Activated CD4-positive, alpha-beta memory T cell treated with anti-CD3 and anti-CD28 coated beads, Interleukin-2, amount 10 ng/mL, durations not matched to agents 7 days and 5 days (primary cell): ENCODE measurements at regions of chr15 and their contacts with region 1.

Region 1: DNA sequence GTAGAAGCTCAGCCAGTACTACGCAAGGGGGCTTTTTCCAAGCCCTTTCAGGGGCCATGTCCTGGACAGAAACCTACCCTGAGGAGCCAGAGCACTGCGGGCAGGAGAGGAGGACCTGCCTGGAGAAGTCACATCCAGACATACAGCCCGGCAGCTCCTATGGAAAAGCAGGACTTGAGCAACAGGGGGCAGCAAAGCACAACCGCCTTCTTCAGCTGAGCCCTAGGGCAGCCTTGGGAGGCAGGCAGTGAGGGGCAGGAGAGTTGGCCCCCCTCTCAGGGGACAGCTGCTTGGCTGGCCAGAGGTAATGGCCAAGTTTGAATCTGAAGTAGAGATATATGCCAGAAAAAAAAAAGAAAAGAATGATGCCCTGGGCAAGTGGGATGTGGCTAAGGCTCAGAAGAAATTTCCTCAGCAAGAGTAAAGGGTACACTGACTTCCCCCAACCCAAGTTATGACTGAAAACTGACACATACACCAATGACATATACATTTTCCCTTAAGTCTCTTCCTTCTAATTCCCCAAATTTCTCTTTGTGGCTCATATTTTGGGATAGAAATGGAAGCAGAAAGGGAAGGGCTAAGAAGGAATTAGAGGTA is 56.9 kb downstream of the CYP19A1 start:
- DNase-seq: peak; percentile 25
- H3K4me3 Mint-ChIP-seq: no peak overlapping the region
- H3K27ac Mint-ChIP-seq: no peak overlapping the region
- H3K4me1 Mint-ChIP-seq: peaks cover 5% of the 10 kb centered on the region
- H3K27me3 Mint-ChIP-seq: peaks cover 23% of the 10 kb centered on the region

Region 2: DNA sequence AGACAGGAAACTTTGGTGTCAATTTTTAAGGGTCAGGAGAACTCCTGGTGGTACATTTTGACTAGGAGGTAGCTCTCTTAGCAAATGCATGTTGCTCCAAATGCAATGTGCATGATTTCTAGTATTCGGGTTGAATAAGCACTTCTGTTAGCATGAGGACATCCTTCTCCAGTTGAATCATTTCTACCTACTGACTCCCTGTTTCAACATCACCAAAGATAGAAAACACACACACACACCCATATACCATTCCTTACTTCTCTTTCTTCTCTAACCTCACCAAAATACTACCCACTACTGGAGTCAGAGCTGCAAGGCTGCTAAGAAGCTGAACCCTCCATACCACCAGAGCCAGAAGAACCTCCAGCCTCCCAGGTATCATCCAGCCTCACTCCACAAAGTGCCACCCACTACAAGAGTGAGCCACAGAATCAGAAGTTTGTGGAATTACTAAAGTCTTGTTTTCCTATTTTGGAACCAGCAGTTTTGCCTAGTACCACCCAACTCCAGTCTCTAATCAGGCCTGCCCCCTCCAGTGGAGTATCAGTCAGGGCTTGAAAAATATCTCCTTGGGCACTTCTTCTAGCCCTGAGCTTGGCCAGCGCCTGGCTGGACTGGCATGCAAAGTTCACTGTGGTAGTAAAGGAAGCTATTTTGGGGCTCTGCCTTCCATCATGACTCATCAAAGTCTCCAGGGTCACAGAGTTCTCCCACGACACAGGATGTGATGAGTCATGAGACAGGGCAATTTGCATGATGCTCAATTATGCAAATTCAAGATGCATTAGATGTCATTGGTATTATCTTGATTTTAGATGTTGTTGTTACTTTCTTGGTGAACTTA is 53.3 kb before region 1 on chr15:
- CTCF ChIA-PET with region 1: interaction called, 15 read pairs
- POLR2A ChIA-PET with region 1: no interaction called
- DNase-seq: peak; percentile 49
- H3K4me3 Mint-ChIP-seq: no peak overlapping the region
- H3K27ac Mint-ChIP-seq: no peak overlapping the region
- H3K4me1 Mint-ChIP-seq: peaks cover 21% of the 10 kb centered on the region
- H3K27me3 Mint-ChIP-seq: no peaks in the 10 kb centered on the region

Region 3: DNA sequence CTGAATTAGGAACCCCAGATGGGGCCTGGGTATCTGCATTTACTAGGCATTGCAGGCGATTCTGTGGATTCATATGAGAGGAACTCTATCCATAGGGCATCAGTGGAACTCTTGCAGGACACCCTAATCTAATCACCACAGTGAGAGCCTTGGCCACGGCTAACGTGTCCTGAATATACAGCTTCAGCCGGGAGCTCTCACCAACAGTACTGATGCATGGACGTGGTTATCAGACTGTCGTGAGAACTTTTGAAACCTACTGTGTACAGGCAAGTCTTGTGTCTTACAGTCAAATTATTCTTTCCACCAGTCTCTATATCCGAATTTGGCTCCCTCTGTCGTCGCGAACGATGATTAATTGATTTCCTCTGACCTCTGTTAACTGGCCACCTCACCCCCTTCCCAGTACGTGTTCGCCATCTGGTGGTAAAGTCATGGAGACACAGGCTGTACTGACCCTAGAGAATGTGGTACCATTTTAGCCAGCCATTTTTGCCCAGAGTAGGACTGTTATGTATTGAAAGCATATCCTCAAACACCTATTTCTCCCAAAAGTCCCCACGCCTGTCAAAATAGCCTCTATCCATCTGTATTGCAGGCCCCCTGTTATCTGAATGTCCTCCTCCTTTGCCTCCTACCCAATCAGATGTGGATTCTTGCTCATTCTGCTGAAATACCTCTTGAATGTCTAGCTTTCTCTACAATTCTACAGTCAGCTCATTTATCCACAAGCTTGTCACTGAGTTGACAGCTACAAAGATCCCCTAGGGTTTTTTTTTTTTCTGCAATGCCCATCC is 99.7 kb after region 1 on chr15:
- CTCF ChIA-PET with region 1: interaction called, 19 read pairs
- POLR2A ChIA-PET with region 1: no interaction called
- DNase-seq: peak; percentile 34
- H3K4me3 Mint-ChIP-seq: no peak overlapping the region
- H3K27ac Mint-ChIP-seq: no peak overlapping the region
- H3K4me1 Mint-ChIP-seq: no peaks in the 10 kb centered on the region
- H3K27me3 Mint-ChIP-seq: peaks cover 5% of the 10 kb centered on the region

Region 4: DNA sequence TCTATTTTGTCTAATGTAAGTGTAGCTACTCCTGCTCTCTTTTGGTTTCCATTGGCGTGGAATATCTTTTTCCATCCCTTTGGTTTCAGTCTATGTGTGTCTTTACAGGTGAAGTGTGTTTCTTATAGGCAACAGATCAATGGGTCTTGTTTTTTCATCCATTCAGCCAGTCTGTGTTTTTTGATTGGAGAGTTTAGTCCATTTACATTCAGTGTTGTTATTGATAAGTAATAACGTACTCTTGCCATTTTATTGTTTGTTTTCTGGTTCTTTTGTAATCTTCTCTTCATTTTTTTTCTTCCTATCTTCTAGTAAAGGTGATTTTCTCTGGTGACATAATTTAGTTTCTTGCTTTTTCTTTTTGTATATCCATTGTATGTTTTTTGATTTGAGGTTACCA is 157.1 kb after region 1 on chr15:
- CTCF ChIA-PET with region 1: no interaction called
- POLR2A ChIA-PET with region 1: no interaction called
- DNase-seq: no peak
- H3K4me3 Mint-ChIP-seq: no peak overlapping the region
- H3K27ac Mint-ChIP-seq: no peak overlapping the region
- H3K4me1 Mint-ChIP-seq: no peaks in the 10 kb centered on the region
- H3K27me3 Mint-ChIP-seq: peaks cover 24% of the 10 kb centered on the region